ENCODE measurements at regions of chr9 and their contacts with region 1.

Region 1: DNA sequence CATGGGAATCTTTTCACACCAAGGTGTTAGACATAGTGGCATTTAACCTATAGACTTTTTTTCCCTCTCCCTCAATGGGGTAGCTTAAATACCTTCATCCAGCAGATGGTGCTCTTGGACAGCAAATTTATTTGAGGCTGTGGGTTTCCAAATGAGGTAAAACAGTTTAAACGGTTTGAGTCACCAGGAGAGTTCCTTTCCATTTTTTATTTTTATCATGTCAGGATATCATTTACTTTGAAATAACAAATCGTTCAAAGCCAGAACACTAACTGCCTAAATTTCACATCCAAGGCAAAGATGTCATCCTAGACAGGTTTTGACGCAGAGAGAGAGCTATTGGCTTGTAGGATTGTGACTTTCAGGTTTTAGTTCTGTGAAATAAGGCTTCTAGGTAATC is 69.7 kb downstream of the KDM4C start:
- DNase-seq: peak; percentile 27
- H3K4me3 Mint-ChIP-seq: no peak overlapping the region
- H3K27ac Mint-ChIP-seq: no peak overlapping the region
- H3K4me1 Mint-ChIP-seq: peaks cover 9% of the 10 kb centered on the region
- H3K27me3 Mint-ChIP-seq: no peaks in the 10 kb centered on the region
- CTCF ChIP-seq: no peak

Region 2: GRCh38 chr9:6907772-6908381 is 80.4 kb after region 1 on chr9:
- CTCF ChIA-PET with region 1: no interaction called
- intact Hi-C with region 1: loop called (anchors 2 kb)
- DNase-seq: no peak
- H3K4me3 Mint-ChIP-seq: no peak overlapping the region
- H3K27ac Mint-ChIP-seq: no peak overlapping the region
- H3K4me1 Mint-ChIP-seq: peaks cover under 1% of the 10 kb centered on the region
- H3K27me3 Mint-ChIP-seq: no peaks in the 10 kb centered on the region
- CTCF ChIP-seq: peak; percentile 21

Region 3: GRCh38 chr9:7045361-7045760 is 217.9 kb after region 1 on chr9:
- CTCF ChIA-PET with region 1: no interaction called
- intact Hi-C with region 1: loop called (anchors 5 kb)
- DNase-seq: no peak
- H3K4me3 Mint-ChIP-seq: no peak overlapping the region
- H3K27ac Mint-ChIP-seq: no peak overlapping the region
- H3K4me1 Mint-ChIP-seq: no peaks in the 10 kb centered on the region
- H3K27me3 Mint-ChIP-seq: no peaks in the 10 kb centered on the region
- CTCF ChIP-seq: no peak

Measured in Calu3 (cell line).